A673 (cell line): ENCODE measurements at regions of chr12 and their contacts with region 1.

Region 1: DNA sequence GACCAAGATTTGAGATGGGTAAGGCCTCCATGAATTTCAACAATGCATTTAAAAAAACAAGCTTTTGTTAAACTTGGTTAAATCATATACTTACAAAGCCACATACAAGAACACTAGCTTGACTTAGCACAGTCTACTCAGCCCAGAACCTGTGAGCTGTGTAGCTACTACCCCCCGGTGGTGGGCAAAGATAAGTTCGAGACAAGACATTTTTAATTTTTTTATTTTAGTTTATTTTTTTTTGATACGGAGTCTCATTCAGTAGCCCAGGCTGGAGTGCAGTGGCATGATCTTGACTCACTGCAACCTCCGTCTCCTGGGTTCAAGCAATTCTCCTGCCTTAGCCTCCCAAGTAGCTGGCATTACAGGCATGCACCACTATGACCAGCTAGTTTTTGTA is 3.7 kb upstream of the NECAP1 start:
- DNase-seq: peak; percentile 80
- H3K4me3 ChIP-seq: no peak overlapping the region
- H3K27ac ChIP-seq: no peak overlapping the region
- H3K4me1 ChIP-seq: peaks cover 27% of the 10 kb centered on the region
- H3K27me3 ChIP-seq: no peaks in the 10 kb centered on the region
- CTCF ChIP-seq: peak; percentile 67

Region 2: DNA sequence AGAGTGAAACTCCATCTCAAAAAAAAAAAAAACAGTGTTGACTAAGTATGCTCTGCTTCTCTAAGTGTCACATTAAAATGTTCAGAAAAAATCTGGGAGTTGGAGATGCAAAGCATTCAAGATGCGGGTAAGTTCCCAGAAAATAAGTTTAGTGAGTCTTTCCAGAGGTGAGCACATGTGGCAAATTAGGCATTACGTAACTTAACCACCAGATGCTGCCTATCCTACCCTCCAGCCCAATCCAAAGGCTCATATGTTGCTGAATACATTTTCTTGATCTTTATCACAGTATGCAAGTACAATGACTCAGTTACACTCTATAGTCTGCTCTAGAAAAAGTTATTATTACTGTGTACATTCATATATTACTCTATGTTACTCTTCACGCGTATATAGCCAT is 209.3 kb before region 1 on chr12:
- CTCF ChIA-PET with region 1: no interaction called
- POLR2A ChIA-PET with region 1: no interaction called
- intact Hi-C with region 1: loop called (anchors 10 kb)
- DNase-seq: peak; percentile 12
- H3K4me3 ChIP-seq: no peak overlapping the region
- H3K27ac ChIP-seq: no peak overlapping the region
- H3K4me1 ChIP-seq: no peaks in the 10 kb centered on the region
- H3K27me3 ChIP-seq: no peaks in the 10 kb centered on the region
- CTCF ChIP-seq: no peak

Region 3: DNA sequence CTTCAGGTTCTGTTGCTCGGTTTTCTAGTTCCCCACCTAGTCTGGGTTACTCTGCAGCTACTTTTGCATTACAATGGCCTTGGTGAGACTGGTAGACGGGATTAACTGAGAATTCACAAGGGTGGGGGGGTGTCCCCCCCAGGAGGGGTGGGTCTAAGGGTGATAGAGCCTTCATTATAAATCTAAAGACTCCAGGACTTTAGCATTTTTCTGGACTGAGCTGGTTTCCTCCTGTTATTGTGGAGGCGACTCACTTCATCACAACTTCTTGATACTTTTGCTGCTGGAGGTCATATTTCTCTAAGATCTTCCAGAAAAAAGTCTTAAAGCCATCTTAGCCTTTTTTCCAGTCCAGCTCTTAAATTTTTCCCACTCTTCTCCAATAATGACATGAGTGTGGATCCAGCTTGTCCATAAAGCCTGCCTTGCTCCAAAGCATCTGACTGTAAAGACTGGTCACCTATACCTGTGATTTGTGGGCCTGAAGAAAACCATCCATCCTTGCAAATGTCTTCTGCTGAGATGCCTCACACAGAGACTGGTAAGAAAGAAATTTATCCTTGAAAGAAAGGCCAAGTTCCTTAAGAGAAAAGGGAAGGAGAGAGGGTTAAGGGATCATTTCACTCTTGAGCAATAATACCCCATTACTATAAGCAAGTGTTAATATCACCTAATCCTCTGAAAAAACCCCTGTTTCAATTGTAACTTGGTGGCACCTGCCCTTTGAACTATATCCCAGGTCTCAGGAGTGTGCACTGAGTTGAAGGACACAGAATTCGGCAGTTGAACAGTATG is 186.0 kb before region 1 on chr12:
- CTCF ChIA-PET with region 1: no interaction called
- POLR2A ChIA-PET with region 1: no interaction called
- intact Hi-C with region 1: no loop called
- DNase-seq: no peak
- H3K4me3 ChIP-seq: no peak overlapping the region
- H3K27ac ChIP-seq: no peak overlapping the region
- H3K4me1 ChIP-seq: peaks cover 5% of the 10 kb centered on the region
- H3K27me3 ChIP-seq: no peaks in the 10 kb centered on the region
- CTCF ChIP-seq: no peak

Region 4: DNA sequence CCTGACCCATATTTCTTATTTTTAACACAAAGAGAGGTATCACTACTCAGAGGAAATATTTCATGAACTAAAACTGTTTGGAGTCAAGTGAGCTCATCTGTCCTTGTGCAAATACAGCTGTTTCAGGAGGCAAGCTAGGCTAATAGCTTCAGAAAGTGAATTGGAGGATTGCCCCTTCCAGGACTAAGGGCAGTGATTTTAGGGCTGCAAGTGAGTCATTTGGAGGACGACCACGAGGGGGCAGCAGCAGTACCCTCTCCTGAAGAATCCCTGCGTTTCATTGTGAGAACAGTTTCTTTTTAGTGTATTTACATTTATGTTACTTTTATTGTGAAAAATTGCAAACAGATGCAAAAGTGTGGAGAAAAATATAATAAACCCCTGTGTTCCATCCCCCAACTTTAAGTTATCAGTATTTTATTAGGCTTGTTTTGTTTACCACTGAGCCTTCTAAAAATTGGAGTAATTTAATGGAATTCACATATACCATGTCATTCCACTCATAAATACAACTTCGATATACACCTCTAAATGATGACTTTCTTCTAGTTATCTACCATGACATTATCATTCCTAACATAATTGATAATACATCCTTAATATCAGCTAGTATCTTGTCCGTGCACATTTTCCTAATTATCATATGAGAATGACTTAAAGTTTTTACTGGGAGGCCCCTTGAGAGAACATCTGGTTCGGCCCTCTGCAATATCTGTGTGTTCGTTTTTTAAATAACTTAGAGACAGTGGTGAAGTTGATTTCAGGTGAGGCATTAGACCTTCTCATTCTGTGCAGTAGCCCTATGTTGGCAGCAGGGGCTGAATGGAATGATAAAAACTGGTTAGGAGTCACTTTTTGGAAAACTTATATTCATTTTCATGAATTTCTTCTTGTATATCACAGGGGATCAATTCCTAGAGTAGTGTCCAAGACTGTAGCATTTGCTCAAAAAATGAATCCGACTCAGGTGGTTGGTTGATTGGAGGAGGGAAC is 32.1 kb before region 1 on chr12:
- CTCF ChIA-PET with region 1: interaction called, 10 read pairs
- POLR2A ChIA-PET with region 1: no interaction called
- intact Hi-C with region 1: loop called (anchors 1 kb)
- DNase-seq: peak; percentile 80
- H3K4me3 ChIP-seq: no peak overlapping the region
- H3K27ac ChIP-seq: no peak overlapping the region
- H3K4me1 ChIP-seq: no peaks in the 10 kb centered on the region
- H3K27me3 ChIP-seq: no peaks in the 10 kb centered on the region
- CTCF ChIP-seq: peak; percentile 91

Region 5: DNA sequence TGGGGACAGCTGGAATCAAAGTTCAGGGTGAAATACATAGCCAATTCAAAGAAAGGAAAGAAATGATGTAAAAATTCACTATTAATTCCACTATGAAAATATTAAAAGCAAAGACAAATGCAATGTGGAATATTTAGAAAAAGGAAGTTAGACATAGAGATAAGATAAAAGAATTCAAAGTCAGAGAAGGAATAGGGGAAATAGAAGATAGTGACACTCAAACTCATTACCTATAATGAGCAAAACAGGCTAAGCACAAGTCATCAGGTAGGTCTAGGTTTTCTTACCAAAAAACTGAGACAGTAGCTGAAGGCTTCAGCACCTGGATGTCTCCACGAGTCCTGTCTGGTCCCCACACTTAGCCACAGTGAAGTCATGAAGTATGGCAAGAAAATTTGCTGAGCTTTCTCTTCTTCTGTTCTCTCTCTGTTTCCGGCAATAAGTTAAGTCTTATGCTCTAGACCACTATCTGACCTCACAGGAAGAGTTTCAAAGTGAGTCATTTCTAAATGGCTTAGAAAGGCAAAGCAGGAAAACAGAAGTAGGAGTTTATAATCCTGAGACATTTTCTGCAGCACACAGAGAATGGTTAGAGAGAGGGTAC is 12.3 kb before region 1 on chr12 and contains the start of gene C3AR1:
- CTCF ChIA-PET with region 1: interaction called, 15 read pairs
- POLR2A ChIA-PET with region 1: no interaction called
- intact Hi-C with region 1: no loop called
- DNase-seq: peak; percentile 74
- H3K4me3 ChIP-seq: no peak within 1 kb of the TSS
- H3K27ac ChIP-seq: peak within 1 kb of the TSS; percentile 15
- H3K4me1 ChIP-seq: no peaks in the 10 kb centered on the region
- H3K27me3 ChIP-seq: no peaks in the 10 kb centered on the region
- CTCF ChIP-seq: no peak
- total RNA-seq, gene C3AR1: 1.3 and 3.5 TPM in 2 replicates